ENCODE measurements at regions of chr3 and their contacts with region 1.

Region 1: GRCh38 chr3:9715764-9716437 is 12.3 kb downstream of the CPNE9 start:
- DNase-seq: peak; percentile 81
- ATAC-seq: peak; percentile 98
- H3K4me3 ChIP-seq: no peak overlapping the region
- H3K27ac ChIP-seq: peak overlapping the region; percentile 9; the same call in 1 of the 2 replicates
- H3K4me1 ChIP-seq: peaks cover 10 to 14% of the 10 kb centered on the region in 2 experiments
- H3K27me3 ChIP-seq: peaks cover 3% of the 10 kb centered on the region; the same call in 1 of the 2 replicates
- CTCF ChIP-seq: peak; percentile 89 to 94 (median 94)
- POLR2A ChIP-seq: no peak
- RAD21 ChIP-seq: peak; percentile 99

Region 2: DNA sequence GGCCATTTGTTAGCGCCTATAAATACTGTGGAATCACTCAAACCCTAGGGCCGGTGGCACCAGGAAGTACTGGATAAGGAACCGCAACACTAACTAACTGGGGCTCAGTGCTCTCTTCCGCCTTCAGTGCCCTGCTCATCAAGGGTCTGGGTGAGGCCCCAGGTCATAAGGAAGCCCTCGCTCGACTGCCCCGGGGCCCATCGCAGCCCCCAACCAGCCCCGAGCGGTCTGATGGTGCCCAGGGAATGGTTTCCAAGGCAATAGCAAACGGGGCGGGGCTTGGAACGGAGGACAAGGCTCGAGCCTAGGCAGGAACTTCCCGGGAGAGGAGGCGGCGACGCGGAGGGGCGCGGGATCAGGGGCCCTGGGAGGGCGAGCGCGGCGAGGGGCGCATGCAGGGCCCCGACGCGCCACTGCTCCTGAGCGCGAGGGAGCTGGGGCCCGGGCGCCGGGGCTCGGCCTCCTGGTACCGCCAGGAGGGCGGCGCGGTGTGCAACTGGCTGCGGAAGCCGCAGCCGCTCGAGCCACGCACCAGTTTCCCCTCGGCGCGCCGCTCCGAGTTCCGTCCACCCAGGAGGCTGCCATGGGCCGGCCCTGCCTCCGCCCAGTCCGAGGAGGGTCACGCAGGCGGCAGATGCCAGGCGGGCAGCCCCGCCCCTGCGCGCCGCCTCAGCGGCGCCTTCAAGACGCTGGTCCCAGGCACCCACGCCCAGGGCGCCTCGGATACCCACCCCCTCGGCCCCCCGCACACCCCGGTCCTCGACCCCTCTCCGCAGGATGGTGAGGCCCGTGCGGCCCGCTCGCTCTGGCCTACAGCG is 93.9 kb after region 1 on chr3 and contains the start of gene TTLL3:
- CTCF ChIA-PET with region 1: interaction called, 11 read pairs
- POLR2A ChIA-PET with region 1: no interaction called
- RAD21 ChIA-PET with region 1: no interaction called
- intact Hi-C with region 1: no loop called
- DNase-seq: no peak
- ATAC-seq: peak; percentile 74
- H3K4me3 ChIP-seq: peak within 1 kb of the TSS; percentile 35 to 54
- H3K27ac ChIP-seq: peak within 1 kb of the TSS; percentile 69
- H3K4me1 ChIP-seq: peaks cover 11 to 33% of the 10 kb centered on the region in 2 experiments; a peak in 3 of 4 replicates
- H3K27me3 ChIP-seq: no peaks in the 10 kb centered on the region
- CTCF ChIP-seq: no peak
- POLR2A ChIP-seq: no peak
- RAD21 ChIP-seq: no peak
- total RNA-seq, gene TTLL3: 40.3 TPM

Region 3: DNA sequence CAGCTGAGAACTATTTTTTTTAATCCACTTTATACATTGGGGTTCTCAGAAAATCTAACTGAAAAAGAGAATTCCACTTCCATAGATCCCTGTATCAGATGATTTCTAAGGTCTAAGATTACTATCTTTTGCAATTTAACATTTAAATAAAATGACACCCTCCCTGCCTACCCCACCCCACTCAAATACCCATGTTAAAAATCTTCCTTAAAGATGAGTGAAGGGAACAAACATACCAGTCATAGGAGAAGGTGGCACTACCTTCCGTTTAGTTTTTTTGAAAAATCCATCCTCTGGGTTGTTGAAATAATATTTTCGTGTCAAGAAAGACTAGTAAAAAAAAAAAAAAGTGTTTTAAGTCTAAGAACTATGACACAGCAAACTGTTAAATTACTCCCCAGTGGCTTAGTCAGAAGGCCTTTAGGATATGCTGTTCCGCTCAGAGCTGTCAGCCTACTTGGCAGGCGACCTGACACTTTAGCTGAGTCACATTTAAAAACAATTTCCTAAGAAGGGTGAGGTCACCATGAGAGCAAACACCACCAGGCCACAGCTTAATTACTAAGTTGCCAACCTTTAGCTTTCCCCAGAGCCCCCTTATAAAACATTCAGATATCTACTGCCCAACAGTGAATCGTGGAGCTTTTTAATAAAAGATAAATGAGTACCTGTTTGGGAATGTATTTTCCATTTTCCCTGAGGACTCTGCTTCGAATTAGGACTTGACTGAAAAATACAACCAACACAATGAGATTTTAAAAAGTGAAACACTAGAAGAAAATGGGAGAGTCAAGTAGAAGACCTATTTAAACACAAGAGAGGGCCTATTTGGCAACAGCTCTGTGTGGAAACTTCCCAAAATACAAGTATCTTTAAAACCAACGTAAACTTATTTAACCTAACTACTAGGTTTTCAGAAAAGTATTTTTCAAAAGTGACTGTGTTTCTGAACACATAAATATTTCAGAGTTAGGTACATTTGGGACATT is 261.1 kb after region 1 on chr3:
- CTCF ChIA-PET with region 1: no interaction called
- POLR2A ChIA-PET with region 1: no interaction called
- RAD21 ChIA-PET with region 1: no interaction called
- intact Hi-C with region 1: no loop called
- DNase-seq: peak; percentile 68
- ATAC-seq: peak; percentile 85
- H3K4me3 ChIP-seq: no peak overlapping the region
- H3K27ac ChIP-seq: peak overlapping the region; percentile 24; the same call in 1 of the 2 replicates
- H3K4me1 ChIP-seq: peaks cover 19 to 21% of the 10 kb centered on the region in 2 experiments
- H3K27me3 ChIP-seq: no peaks in the 10 kb centered on the region
- CTCF ChIP-seq: no peak
- POLR2A ChIP-seq: no peak
- RAD21 ChIP-seq: 0 out of 2 replicates have a peak, but pooled peaks have one; percentile 6

Region 4: GRCh38 chr3:10522646-10523303 is 806.9 kb after region 1 on chr3:
- CTCF ChIA-PET with region 1: no interaction called
- POLR2A ChIA-PET with region 1: no interaction called
- RAD21 ChIA-PET with region 1: no interaction called
- intact Hi-C with region 1: no loop called
- DNase-seq: no peak
- ATAC-seq: no peak
- H3K4me3 ChIP-seq: no peak overlapping the region
- H3K27ac ChIP-seq: no peak overlapping the region
- H3K4me1 ChIP-seq: peaks cover 0 to 11% of the 10 kb centered on the region in 2 experiments; a peak in 2 of 4 replicates
- H3K27me3 ChIP-seq: peaks cover 48% of the 10 kb centered on the region
- CTCF ChIP-seq: no peak
- POLR2A ChIP-seq: no peak
- RAD21 ChIP-seq: no peak